AG04450 (cell line): ENCODE measurements at regions of chr18 and their contacts with region 1.

Region 1: DNA sequence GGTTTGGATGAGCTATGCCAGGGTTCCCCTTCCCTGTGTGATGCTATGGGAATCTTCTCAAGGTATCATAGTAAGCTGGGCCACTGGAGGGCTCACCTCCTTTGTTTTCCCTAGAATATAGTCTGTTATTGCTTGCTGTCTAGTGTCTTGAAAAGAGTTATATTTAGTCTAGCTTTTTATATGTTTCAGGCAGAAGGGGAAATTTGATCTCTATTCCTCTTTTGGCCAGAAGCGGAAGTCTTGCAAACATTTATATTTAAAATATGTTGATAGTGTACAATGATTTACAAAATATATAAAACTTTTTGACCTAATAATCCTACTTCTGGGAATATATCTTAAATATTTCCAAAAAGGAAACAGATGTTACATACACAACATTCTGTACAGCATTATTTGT is 260.7 kb downstream of the FHOD3 start:
- DNase-seq: no peak
- H3K4me3 ChIP-seq: no peak overlapping the region
- H3K27ac ChIP-seq: peak overlapping the region; percentile 25
- H3K27me3 ChIP-seq: no peaks in the 10 kb centered on the region
- CTCF ChIP-seq: peak; percentile 26; the same call in 1 of the 2 replicates

Region 2: GRCh38 chr18:36572135-36572856 is 14.1 kb after region 1 on chr18:
- CTCF ChIA-PET with region 1: interaction called, 19 read pairs
- POLR2A ChIA-PET with region 1: no interaction called
- DNase-seq: no peak
- H3K4me3 ChIP-seq: no peak overlapping the region
- H3K27ac ChIP-seq: no peak overlapping the region
- H3K27me3 ChIP-seq: no peaks in the 10 kb centered on the region
- CTCF ChIP-seq: peak; percentile 78